Transverse colon (tissue), 4 donors: ENCODE measurements at regions of chr7 and their contacts with region 1.

Region 1: DNA sequence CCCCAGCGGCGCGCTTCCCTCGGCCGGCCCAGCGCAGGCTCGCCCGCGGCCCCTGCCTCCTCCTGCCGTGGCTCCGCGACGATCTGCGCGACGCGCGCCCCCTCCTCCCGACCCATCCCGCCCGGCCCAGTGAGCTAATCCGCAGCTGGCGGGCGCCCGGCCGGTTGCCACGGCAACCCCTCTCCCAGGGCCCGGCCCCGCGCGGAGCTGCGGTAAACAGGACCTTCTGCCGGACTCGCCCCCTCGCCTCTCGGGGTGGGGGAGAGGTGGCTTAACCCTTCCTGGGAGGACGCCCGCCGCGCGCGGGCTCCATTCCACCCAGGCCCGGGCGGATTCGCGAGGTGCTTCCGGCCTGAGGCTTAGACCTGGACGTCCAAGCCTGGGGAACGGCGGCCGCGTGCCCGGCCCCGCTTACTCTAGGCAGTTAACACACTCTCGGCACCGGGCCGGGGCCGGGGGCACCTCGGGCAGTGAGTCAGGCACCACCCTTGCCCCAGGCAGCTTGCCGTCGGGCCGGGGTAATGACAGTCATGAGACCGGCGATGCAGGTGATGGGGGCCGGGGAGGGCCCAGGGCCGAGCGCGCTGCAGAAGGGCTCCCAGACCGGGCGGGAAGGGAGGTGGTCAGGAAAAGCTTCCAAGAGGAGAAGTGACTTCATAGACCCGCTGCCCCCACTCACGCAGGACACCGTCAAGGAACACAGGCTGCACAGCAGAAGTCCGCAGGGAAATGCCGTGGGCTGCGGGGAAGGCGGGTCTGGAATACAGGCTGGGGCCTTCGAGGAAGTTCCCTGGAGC is at the start of gene DENND2A:
- DNase-seq: peak; percentile 57
- H3K4me3 ChIP-seq: peak within 1 kb of the TSS; percentile 33 to 68 (median 53)
- H3K27ac ChIP-seq: peak within 1 kb of the TSS; percentile 62 to 91 (median 79)
- H3K4me1 ChIP-seq: peaks cover 4 to 29% (median 14%) of the 10 kb centered on the region in 4 donors
- H3K27me3 ChIP-seq: peaks cover 20% of the 10 kb centered on the region
- CTCF ChIP-seq: no peak
- EP300 ChIP-seq: no peak
- POLR2A ChIP-seq: no peak
- total RNA-seq, gene DENND2A: 4.1 to 19.9 (median 7.1) TPM

Region 2: DNA sequence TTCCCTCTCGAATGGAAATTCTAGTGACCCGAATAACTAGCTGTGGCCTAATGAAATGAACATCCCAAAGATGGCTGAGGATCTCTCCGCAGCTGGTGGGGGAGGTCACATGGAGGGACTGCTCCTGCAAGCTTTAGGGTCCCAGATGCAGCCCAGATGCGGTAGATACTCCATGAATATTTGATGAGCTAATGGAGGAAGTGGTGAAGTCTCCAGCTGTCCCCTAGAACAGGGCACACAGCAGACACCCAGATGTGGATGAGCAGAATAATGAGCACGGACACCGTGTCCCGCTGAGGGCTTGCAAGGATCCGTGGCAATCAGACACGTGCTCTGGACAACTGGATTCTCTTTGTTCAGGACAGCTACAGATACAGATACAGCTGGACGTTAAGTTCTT is 59.5 kb before region 1 on chr7:
- in situ Hi-C with region 1: no loop called
- intact Hi-C with region 1: loop called (anchors 5 kb)
- DNase-seq: no peak
- H3K4me3 ChIP-seq: no peak overlapping the region
- H3K27ac ChIP-seq: no peak overlapping the region
- H3K4me1 ChIP-seq: peaks cover 0 to 9% (median 1%) of the 10 kb centered on the region in 4 donors
- H3K27me3 ChIP-seq: no peaks in the 10 kb centered on the region
- CTCF ChIP-seq: no peak
- EP300 ChIP-seq: no peak
- POLR2A ChIP-seq: no peak

Region 3: DNA sequence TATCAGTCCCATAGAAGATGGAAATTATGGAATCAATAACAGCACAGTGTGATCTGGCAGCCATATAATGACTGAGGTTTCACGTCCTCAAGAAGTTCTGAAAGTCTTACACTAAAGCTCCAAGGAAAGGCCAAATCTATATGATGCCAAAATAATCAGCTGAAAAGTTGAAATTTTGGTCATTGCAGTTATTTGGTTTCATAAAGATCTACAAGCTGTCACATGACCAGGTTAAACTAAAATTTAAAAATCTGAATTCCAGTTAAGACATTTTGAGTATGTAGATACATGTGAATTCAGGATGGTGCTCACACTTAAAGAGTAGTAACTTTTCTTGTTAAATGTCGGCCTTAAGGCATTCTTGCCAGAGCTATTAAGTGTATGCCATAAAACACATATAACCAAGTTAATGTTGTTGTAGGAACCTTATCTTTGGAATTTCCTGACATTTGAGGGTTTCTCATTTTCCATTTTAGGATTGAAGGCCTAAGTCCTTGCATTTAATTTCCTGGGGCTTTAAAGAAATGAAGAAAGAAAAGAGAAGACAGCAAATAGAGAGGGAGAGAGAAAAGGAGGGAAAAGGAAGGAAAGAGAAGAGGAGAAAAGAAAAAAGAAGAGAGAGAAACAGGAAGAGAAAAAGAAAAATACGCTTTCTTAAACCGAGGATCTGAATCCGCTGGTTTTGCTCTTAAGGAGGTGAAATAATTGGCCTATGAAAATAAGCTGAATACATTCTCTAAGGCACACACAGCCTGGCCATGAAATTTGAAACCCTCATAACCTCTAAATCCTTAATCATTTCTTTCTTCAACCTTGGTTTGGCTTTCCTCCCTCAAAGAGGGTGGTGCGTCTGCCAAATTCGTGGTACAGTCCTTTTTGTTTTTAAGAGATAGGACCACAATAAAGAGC is 44.2 kb before region 1 on chr7:
- in situ Hi-C with region 1: no loop called
- intact Hi-C with region 1: no loop called
- DNase-seq: no peak
- H3K4me3 ChIP-seq: no peak overlapping the region
- H3K27ac ChIP-seq: peak overlapping the region in 2 of 4 donors; percentile 5 to 8
- H3K4me1 ChIP-seq: no peaks in the 10 kb centered on the region
- H3K27me3 ChIP-seq: no peaks in the 10 kb centered on the region
- CTCF ChIP-seq: no peak
- EP300 ChIP-seq: no peak
- POLR2A ChIP-seq: no peak